ENCODE measurements at regions of chr4 and their contacts with region 1.

Region 1: DNA sequence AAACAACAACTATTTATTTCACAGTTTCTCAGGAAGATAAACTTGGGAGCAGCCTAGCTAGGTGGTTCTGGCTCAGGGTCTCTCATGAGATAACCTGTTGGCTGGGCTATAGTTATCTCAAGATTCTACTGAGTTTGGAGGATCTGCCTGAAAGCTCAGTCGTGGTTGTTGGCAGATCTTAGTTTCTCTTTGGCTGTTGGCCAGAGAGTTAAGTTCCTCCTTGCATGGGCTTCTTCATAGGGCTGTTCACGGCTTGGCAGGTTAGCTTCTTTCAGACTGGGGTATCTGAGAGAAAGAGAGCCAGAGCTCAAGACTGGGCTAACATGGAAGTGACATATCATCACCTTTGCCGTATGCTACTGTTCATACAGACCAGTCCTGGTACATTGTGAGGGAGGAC is 28.7 kb downstream of the SEC24B start:
- DNase-seq: no peak
- ATAC-seq: no peak
- H3K4me3 Mint-ChIP-seq: no peak overlapping the region
- H3K27ac Mint-ChIP-seq: peak overlapping the region; percentile 46
- H3K4me1 Mint-ChIP-seq: peaks cover 24% of the 10 kb centered on the region
- H3K27me3 Mint-ChIP-seq: no peaks in the 10 kb centered on the region
- CTCF ChIP-seq: no peak

Region 2: DNA sequence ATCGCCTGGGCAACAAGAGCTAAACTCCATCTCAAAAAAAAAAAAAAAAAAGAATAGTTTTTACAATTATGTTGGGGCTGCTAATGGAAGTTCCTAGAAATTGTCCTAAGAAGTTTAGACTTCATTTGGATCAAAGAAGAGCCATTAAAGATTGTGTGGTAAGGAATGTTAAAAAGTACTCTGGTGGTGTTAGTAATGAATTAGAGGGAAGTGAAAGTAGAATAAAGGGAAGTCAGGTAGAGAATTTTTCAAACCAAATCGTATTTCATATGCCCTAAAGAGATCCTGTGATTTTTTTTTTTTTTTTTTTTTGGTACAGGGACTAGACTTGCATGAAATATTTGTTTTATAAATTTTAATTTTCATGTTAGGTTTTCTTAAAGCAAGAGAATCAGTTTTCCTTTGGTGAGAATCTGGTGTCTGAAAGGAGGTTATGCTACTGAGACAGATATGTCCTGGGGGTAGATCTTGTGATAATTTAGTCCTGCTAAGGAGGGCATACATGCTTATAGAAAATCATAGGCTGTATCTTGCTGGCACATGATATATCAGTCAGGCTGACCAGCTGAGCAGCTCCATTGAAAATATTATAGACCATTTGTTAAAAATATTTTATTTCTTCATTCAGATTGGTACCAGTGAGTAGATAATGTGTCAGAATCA is 18.0 kb before region 1 on chr4:
- CTCF ChIA-PET with region 1: no interaction called
- POLR2A ChIA-PET with region 1: no interaction called
- intact Hi-C with region 1: loop called (anchors 2 kb)
- DNase-seq: no peak
- ATAC-seq: peak; percentile 79
- H3K4me3 Mint-ChIP-seq: peak overlapping the region; percentile 57
- H3K27ac Mint-ChIP-seq: peak overlapping the region; percentile 67
- H3K4me1 Mint-ChIP-seq: peaks cover 72% of the 10 kb centered on the region
- H3K27me3 Mint-ChIP-seq: no peaks in the 10 kb centered on the region
- CTCF ChIP-seq: no peak

Measured in activated B cell treated with CpG ODN at 0.5 μM for 24 hours (primary cell).